PC-3 (cell line): ENCODE measurements at regions of chr5 and their contacts with region 1.

Region 1: DNA sequence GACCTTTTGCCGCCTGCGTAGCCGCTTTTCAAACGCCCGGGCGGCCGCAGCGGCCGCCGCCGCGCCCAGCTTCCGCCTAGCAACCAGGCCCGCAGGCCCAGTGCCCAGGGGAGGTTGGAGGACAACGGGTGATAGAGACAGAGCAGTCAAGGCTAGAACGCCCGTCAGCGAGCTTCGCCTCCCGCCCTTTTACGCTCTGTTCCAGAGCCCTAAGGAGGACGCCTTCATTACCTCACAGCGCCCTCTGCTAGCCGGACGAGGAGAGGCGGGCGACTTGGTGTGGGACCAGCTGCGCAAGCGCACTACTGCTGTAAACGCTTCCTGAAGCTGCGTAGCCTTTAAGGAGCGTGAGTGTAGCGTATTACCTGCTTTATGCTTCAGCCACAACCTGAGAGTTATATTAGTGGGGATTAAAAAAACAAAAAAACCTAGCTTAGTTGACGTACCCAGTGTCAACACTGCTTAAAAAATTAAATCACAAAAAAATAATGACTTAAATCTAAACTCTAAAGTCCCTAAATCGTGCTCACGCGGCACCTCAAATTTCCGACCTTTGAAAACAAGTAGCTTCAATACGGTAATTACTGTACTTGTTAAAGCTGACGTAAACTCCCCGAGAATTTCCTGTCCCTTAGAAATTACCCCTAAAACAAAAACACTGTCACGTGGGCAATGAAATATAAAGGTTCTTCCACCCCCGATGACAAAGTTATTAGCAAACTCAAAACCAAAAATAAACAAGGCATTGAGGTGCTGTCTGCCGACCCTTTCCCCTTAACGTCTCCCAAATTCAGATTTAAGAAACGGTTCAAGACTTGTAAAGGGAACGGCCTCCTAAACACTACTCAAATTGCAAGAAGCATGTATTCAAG is at the start of gene CEP120:
- DNase-seq: peak; percentile 99
- ATAC-seq: peak; percentile 97
- H3K4me3 ChIP-seq: peak within 1 kb of the TSS; percentile 99
- H3K27ac ChIP-seq: peak within 1 kb of the TSS; percentile 41
- H3K4me1 ChIP-seq: peaks cover 13% of the 10 kb centered on the region
- H3K27me3 ChIP-seq: no peaks in the 10 kb centered on the region
- CTCF ChIP-seq: peak; percentile 83
- total RNA-seq, gene CEP120: 5.4 and 11.5 TPM in 2 replicates

Region 2: DNA sequence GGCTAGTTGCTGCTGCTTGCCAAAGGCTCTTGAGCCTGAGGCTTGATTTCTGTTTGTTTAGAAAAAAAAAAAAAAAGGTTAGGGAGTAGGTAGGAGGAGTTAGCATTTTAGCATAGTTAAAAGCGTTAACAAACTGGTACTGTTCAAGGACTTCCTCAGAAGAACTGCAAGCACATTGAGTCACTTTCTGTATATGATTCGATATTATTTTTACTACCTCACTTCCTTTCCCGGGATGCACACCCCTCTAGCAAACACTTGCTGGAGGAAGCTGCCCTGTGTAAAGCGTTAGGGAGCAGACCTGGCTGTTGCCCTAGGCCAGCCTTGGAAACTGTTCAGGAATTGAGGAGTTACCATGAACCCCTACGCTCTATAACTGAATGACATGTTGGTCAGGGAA is 15.4 kb after region 1 on chr5:
- CTCF ChIA-PET with region 1: no interaction called
- POLR2A ChIA-PET with region 1: no interaction called
- intact Hi-C with region 1: loop called (anchors 1 kb)
- DNase-seq: peak; percentile 53
- ATAC-seq: peak; percentile 97
- H3K4me3 ChIP-seq: no peak overlapping the region
- H3K27ac ChIP-seq: peak overlapping the region; percentile 13; the same call in 1 of the 2 replicates
- H3K4me1 ChIP-seq: peaks cover 11% of the 10 kb centered on the region; the same call in 1 of the 2 replicates
- H3K27me3 ChIP-seq: no peaks in the 10 kb centered on the region
- CTCF ChIP-seq: no peak

Region 3: GRCh38 chr5:123482258-123482657 is 58.7 kb after region 1 on chr5:
- CTCF ChIA-PET with region 1: interaction called, 3 read pairs
- POLR2A ChIA-PET with region 1: no interaction called
- intact Hi-C with region 1: loop called (anchors 1 kb)
- DNase-seq: peak; percentile 59
- ATAC-seq: peak; percentile 82
- H3K4me3 ChIP-seq: no peak overlapping the region
- H3K27ac ChIP-seq: no peak overlapping the region
- H3K4me1 ChIP-seq: peaks cover 6% of the 10 kb centered on the region
- H3K27me3 ChIP-seq: no peaks in the 10 kb centered on the region
- CTCF ChIP-seq: no peak

Region 4: DNA sequence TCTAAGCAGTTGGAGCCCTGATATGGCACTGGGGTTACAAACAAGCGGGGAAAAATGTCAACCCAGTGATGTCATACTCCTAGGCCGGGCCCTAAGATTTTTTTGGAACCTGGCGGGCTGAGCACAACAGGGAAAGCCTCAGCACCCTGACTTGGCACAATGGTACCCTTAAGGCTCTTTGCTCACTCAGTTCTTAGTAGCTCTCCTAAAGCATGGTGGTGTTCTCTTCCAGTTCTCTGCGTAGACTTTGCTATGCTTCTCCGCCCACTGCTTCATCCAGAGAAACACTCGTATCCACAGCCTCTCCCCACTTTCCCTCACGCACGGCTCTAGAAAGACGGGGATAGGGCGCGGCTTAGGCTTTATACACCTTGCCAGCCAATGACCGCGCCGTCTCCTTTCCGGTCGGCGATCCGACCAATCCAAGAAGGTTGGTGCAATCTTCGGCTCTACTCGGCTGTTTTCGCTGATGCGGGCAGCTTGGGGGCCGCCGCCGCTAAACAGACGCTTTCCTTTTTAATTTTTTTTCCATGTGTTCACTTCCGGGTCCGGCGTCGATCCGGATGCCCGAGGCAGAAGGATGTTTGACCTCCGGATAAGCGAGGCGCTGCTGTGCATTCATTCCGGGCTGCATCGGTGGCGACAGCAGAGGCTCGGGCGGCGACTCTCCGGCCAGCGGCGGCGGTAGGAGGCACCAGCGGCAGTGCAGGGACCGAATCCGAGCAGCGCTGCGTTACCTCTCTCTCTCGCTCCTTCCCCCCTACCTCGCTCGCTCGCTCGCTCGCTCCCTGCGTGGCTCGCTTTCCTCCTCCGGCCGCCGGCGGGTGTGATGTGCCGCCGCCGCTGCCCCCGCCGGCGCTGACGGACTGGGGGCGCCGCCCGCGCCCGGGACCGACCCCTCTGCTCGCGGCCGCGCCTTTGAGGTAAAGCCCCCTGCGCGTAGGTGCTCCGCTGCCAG is 88.4 kb after region 1 on chr5 and contains the start of gene CSNK1G3:
- CTCF ChIA-PET with region 1: interaction called, 7 read pairs
- POLR2A ChIA-PET with region 1: no interaction called
- intact Hi-C with region 1: loop called (anchors 1 kb)
- DNase-seq: peak; percentile 94
- ATAC-seq: peak; percentile 95
- H3K4me3 ChIP-seq: peak within 1 kb of the TSS; percentile 91
- H3K27ac ChIP-seq: peak within 1 kb of the TSS; percentile 54
- H3K4me1 ChIP-seq: peaks cover 25% of the 10 kb centered on the region
- H3K27me3 ChIP-seq: no peaks in the 10 kb centered on the region
- CTCF ChIP-seq: no peak
- total RNA-seq, gene CSNK1G3: 21.6 and 23.4 TPM in 2 replicates

Region 5: DNA sequence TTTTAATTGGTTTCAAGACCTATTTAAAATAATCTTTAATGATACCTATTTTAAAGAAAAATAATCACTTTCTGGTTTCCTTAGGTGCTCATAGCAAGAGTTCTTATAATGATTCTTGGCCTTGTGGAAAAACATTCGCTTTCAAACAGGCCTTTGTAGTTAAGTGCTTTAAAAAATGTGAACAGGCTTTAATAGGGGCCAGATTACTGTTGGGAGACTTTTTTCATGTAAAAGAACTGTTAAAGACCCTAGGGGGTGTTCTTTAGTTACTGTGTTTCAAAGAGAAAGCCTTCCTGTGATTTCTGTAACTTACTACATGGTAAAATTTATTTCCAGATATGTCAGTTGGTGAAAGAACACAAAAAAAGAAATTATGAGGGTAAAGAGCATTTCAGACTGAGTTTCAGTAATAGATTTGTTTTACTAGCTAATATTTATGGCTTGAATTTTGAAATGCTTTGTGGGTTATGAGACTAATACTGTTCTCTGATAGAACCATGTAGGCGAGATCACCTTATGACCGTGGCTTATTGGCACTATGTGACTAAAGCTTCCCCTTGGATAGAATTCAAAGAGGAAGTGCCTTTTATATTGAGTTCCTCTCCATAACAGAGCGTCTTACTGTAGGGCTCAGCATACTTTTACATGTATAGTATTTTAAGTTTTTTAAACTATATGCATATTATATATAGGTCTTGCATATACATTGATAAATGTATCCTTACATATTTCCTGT is 159.2 kb after region 1 on chr5:
- CTCF ChIA-PET with region 1: no interaction called
- POLR2A ChIA-PET with region 1: no interaction called
- intact Hi-C with region 1: no loop called
- DNase-seq: peak; percentile 4
- ATAC-seq: no peak; the same call in 1 of the 2 replicates
- H3K4me3 ChIP-seq: no peak overlapping the region
- H3K27ac ChIP-seq: no peak overlapping the region
- H3K4me1 ChIP-seq: no peaks in the 10 kb centered on the region
- H3K27me3 ChIP-seq: no peaks in the 10 kb centered on the region
- CTCF ChIP-seq: no peak

Region 6: DNA sequence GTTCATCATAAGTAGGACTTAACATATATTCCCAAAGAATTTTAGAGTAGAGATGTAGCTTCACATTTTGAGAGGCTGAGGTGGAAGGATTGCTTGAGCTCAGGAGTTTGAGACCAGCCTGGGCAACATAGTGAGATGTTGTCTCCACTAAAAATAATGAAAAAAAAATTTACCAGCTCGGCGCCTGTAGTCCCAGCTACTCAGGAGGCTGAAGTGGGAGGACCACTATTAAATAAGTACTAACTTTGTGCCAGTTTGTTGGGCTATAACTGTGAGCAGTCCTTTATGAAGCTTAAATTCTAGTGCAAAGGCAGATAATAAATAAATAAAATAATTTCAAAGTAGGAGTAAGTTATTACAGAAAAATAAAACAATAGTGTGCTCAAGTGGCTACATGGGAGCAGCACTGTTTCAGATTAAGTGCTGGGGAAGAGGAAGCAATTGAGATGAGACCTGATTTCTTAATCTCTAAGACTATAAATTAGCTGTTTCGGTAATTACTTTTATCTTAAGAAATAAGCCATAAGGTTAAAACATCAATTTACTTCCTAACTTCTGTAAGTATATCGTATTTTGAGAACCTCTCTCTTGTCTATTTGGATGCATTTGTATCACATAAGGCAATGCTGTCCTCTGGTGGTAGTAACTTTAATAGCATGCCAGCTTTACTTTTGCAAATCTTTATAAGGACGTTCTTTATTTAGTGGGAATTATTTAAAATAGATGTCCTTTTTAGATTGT is 187.3 kb after region 1 on chr5:
- CTCF ChIA-PET with region 1: interaction called, 4 read pairs
- POLR2A ChIA-PET with region 1: no interaction called
- intact Hi-C with region 1: loop called (anchors 2 kb)
- DNase-seq: peak; percentile 68
- ATAC-seq: peak; percentile 45
- H3K4me3 ChIP-seq: no peak overlapping the region
- H3K27ac ChIP-seq: no peak overlapping the region
- H3K4me1 ChIP-seq: no peaks in the 10 kb centered on the region
- H3K27me3 ChIP-seq: no peaks in the 10 kb centered on the region
- CTCF ChIP-seq: peak; percentile 86

Region 7: DNA sequence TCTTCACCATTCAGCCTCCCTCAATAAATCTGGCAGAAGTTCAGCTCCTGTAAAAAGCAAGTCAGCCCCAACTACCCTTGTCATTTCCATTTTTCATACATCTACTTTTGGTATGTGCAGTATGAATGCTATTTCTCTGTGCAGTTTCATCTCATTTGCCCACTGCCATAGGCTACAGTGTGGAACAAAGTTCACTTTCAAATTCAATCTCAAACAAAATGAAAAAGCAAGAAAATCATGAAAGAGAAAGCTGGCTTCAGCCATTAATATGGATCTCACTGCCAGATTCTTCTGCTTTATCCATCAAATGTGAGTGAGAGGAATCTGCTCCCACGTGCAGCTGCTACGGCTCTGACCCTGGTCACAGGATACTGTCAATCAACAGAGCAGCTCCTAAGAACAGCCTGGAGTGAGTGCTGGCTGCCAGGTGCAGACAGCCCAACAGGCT is 828.7 kb after region 1 on chr5:
- CTCF ChIA-PET with region 1: no interaction called
- POLR2A ChIA-PET with region 1: no interaction called
- intact Hi-C with region 1: no loop called
- DNase-seq: no peak
- ATAC-seq: no peak
- H3K4me3 ChIP-seq: no peak overlapping the region
- H3K27ac ChIP-seq: no peak overlapping the region
- H3K4me1 ChIP-seq: no peaks in the 10 kb centered on the region
- H3K27me3 ChIP-seq: no peaks in the 10 kb centered on the region
- CTCF ChIP-seq: no peak